ENCODE measurements at regions of chr14 and their contacts with region 1.

Region 1: GRCh38 chr14:54773171-54773975 is 129.3 kb downstream of the GCH1 start:
- DNase-seq: peak; percentile 98
- H3K4me3 Mint-ChIP-seq: peak overlapping the region; percentile 42
- H3K27ac Mint-ChIP-seq: peak overlapping the region; percentile 93
- H3K4me1 Mint-ChIP-seq: peaks cover 21% of the 10 kb centered on the region
- H3K27me3 Mint-ChIP-seq: no peaks in the 10 kb centered on the region
- CTCF ChIP-seq: peak; percentile 49

Region 2: DNA sequence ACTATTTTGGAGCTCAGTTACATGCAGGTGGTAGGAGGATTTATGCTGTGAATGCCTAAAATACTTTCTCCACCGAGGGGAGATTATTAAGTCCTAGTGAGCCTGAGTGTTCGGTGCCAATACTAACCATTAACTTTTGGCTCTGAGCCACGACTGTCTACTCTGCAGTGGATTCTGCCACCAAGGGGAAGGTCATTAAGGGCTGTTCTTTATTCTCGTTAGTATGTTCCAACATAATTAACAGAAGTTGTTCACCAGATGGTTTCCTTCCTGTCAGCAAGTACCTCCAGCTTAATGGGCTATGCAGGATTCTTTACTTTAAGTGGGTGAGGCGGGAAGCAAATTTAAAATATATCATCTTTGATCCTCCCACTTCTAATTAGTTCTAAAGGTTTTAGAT is 1143.0 kb before region 1 on chr14:
- CTCF ChIA-PET with region 1: no interaction called
- POLR2A ChIA-PET with region 1: no interaction called
- intact Hi-C with region 1: no loop called
- DNase-seq: no peak
- H3K4me3 Mint-ChIP-seq: no peak overlapping the region
- H3K27ac Mint-ChIP-seq: no peak overlapping the region
- H3K4me1 Mint-ChIP-seq: no peaks in the 10 kb centered on the region
- H3K27me3 Mint-ChIP-seq: no peaks in the 10 kb centered on the region
- CTCF ChIP-seq: no peak

Region 3: GRCh38 chr14:54683882-54684794 is 89.2 kb before region 1 on chr14:
- CTCF ChIA-PET with region 1: interaction called, 21 read pairs
- POLR2A ChIA-PET with region 1: interaction called, 3 read pairs
- intact Hi-C with region 1: no loop called
- DNase-seq: peak; percentile 78
- H3K4me3 Mint-ChIP-seq: peak overlapping the region; percentile 36
- H3K27ac Mint-ChIP-seq: peak overlapping the region; percentile 89
- H3K4me1 Mint-ChIP-seq: peaks cover 55% of the 10 kb centered on the region
- H3K27me3 Mint-ChIP-seq: no peaks in the 10 kb centered on the region
- CTCF ChIP-seq: no peak

Region 4: GRCh38 chr14:54718046-54718445 is 55.3 kb before region 1 on chr14:
- CTCF ChIA-PET with region 1: interaction called, 10 read pairs
- POLR2A ChIA-PET with region 1: interaction called, 3 read pairs
- intact Hi-C with region 1: no loop called
- DNase-seq: no peak
- H3K4me3 Mint-ChIP-seq: no peak overlapping the region
- H3K27ac Mint-ChIP-seq: no peak overlapping the region
- H3K4me1 Mint-ChIP-seq: peaks cover 11% of the 10 kb centered on the region
- H3K27me3 Mint-ChIP-seq: no peaks in the 10 kb centered on the region
- CTCF ChIP-seq: no peak

Region 5: DNA sequence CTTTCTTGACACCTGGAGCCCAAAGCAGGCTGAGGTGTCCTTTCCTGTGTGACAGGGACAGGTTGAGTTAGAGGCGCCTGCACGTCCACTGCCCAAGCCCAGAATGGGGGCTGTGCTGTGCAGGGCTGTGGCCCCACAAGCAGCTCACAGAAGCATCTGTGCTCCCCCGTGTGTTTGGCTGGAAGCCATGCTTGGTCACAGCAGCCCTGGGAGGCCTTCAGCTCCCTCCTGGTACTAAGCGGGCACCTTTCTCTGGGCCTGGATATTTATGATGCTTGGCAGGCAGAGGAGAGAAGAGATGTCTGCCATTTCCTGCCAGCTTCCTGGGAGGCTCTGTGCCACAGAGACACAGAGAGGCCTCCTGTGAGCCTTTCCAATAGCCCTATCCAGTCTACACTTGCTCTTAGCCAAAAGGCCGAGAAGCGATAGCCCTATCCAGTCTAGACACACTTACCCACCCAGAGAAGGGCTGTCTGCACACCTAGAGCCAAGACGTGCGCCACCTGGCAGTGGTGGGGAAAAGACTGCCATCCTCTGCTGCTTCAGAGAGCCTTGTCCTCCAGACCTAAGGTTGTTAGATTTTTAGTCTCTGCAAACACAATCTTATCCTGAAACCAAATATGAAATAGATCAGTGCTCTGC is 11.9 kb after region 1 on chr14:
- CTCF ChIA-PET with region 1: interaction called, 14 read pairs
- POLR2A ChIA-PET with region 1: no interaction called
- intact Hi-C with region 1: no loop called
- DNase-seq: no peak
- H3K4me3 Mint-ChIP-seq: no peak overlapping the region
- H3K27ac Mint-ChIP-seq: no peak overlapping the region
- H3K4me1 Mint-ChIP-seq: no peaks in the 10 kb centered on the region
- H3K27me3 Mint-ChIP-seq: no peaks in the 10 kb centered on the region
- CTCF ChIP-seq: no peak